Activated CD8-positive, alpha-beta T cell treated with anti-CD3 and anti-CD28 coated beads, Interleukin-2, amount 10 ng/mL, durations not matched to agents 7 days and 5 days (primary cell): ENCODE measurements at regions of chr9 and their contacts with region 1.

Region 1: GRCh38 chr9:124595743-124596142 is 88.5 kb upstream of the NR5A1 start:
- DNase-seq: no peak
- ATAC-seq: no peak
- H3K4me3 Mint-ChIP-seq: no peak overlapping the region
- H3K27ac Mint-ChIP-seq: no peak overlapping the region
- H3K4me1 Mint-ChIP-seq: no peaks in the 10 kb centered on the region
- H3K27me3 Mint-ChIP-seq: peaks cover 33% of the 10 kb centered on the region

Region 2: DNA sequence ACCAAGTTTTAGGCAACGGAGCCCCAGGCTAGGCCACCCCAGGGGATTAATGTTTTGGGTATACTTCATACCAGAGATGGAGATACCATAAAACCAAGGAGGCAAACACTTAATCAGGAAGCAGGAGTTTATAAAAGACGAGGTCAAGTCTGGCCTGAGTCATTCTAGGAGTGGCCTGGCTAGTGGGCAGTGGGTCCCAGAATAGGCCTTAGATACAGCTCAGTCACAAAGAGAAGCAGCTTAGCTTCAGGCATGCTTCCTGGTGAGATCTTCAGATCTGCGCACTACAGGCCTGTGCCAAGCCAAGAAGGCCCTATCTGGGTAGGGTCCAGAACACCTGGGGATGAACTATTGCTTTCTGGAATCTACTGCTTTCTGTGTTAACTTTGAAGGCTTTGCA is 68.0 kb before region 1 on chr9:
- CTCF ChIA-PET with region 1: no interaction called
- POLR2A ChIA-PET with region 1: no interaction called
- DNase-seq: no peak
- ATAC-seq: no peak
- H3K4me3 Mint-ChIP-seq: no peak overlapping the region
- H3K27ac Mint-ChIP-seq: no peak overlapping the region
- H3K4me1 Mint-ChIP-seq: no peaks in the 10 kb centered on the region
- H3K27me3 Mint-ChIP-seq: peaks cover 18% of the 10 kb centered on the region

Region 3: GRCh38 chr9:124551472-124552272 is 44.1 kb before region 1 on chr9:
- CTCF ChIA-PET with region 1: interaction called, 11 read pairs
- POLR2A ChIA-PET with region 1: no interaction called
- DNase-seq: peak; percentile 47
- ATAC-seq: peak; percentile 78
- H3K4me3 Mint-ChIP-seq: no peak overlapping the region
- H3K27ac Mint-ChIP-seq: no peak overlapping the region
- H3K4me1 Mint-ChIP-seq: peaks cover 8% of the 10 kb centered on the region
- H3K27me3 Mint-ChIP-seq: peaks cover 6% of the 10 kb centered on the region

Region 4: DNA sequence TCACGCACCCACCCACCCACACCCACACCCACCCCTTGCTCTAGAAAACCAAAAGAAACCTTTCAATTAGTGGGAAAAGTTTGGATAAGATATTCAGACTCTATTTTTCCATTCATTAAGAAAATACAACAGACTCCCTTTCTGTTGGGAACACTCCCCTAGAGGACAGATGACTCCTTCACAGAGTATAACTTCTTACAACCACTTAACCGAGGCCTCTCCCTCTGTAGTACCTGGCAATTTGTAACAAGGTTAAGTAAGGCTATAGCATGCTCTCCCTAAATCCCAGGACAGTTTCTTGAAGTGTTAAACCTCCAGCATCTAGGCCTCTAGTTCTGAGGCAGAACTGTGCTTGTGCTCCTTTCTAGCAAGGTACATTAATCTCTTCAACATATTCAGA is 12.6 kb before region 1 on chr9:
- CTCF ChIA-PET with region 1: no interaction called
- POLR2A ChIA-PET with region 1: no interaction called
- DNase-seq: no peak
- ATAC-seq: no peak
- H3K4me3 Mint-ChIP-seq: no peak overlapping the region
- H3K27ac Mint-ChIP-seq: no peak overlapping the region
- H3K4me1 Mint-ChIP-seq: no peaks in the 10 kb centered on the region
- H3K27me3 Mint-ChIP-seq: peaks cover 7% of the 10 kb centered on the region

Region 5: DNA sequence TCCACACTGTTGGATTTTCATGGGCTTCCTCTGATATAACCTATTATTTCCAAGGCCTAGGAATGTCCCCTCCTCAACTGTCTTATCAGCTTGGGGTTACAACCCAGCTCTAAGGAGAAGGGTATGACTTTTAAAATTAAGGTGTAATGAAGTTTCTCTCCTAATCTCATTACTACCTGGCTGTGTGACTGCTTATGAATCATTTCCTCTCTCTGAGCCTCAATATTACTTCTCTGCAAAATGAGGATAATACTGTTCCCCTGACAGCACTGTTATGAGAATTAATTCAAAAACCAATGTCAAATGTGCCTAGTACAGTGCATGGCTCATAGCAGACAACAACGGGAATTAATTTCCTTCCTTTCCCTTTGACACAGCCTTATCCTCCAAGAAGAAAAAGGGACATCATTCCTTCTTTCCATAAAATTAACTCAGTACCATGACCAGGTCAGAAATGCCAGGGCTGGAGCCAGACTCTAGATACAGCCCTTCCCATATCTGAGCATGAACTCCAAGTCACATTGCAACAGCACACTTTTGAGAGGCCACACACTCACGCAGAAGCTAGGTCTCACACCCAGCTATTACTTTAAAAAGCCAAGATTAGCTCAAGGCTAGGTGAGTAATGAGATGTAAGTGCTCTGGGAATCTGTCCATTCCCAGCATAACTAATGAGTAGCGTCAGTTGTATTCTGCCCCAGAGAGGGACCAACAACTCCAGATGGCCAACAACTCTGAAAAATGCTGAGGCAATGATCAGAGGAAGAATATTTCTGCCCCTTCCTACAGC is 56.7 kb after region 1 on chr9:
- CTCF ChIA-PET with region 1: no interaction called
- POLR2A ChIA-PET with region 1: no interaction called
- DNase-seq: no peak
- ATAC-seq: no peak
- H3K4me3 Mint-ChIP-seq: no peak overlapping the region
- H3K27ac Mint-ChIP-seq: no peak overlapping the region
- H3K4me1 Mint-ChIP-seq: no peaks in the 10 kb centered on the region
- H3K27me3 Mint-ChIP-seq: peaks cover 18% of the 10 kb centered on the region